IMR-90 (cell line): ENCODE measurements at regions of chr12 and their contacts with region 1.

Region 1: GRCh38 chr12:56224102-56224701 is at the start of gene NABP2:
- DNase-seq: peak; percentile 96
- ATAC-seq: peak; percentile 76
- H3K4me3 ChIP-seq: peak within 1 kb of the TSS; percentile 63
- H3K27ac ChIP-seq: peak within 1 kb of the TSS; percentile 73
- H3K4me1 ChIP-seq: peaks cover 4% of the 10 kb centered on the region; the same call in 1 of the 2 replicates
- H3K27me3 ChIP-seq: no peaks in the 10 kb centered on the region
- CTCF ChIP-seq: peak; percentile 74
- POLR2A ChIP-seq: no peak
- RAD21 ChIP-seq: no peak; the same call in none of the 2 replicates
- total RNA-seq, gene NABP2: 29.2 and 31.4 TPM in 2 replicates

Region 2: DNA sequence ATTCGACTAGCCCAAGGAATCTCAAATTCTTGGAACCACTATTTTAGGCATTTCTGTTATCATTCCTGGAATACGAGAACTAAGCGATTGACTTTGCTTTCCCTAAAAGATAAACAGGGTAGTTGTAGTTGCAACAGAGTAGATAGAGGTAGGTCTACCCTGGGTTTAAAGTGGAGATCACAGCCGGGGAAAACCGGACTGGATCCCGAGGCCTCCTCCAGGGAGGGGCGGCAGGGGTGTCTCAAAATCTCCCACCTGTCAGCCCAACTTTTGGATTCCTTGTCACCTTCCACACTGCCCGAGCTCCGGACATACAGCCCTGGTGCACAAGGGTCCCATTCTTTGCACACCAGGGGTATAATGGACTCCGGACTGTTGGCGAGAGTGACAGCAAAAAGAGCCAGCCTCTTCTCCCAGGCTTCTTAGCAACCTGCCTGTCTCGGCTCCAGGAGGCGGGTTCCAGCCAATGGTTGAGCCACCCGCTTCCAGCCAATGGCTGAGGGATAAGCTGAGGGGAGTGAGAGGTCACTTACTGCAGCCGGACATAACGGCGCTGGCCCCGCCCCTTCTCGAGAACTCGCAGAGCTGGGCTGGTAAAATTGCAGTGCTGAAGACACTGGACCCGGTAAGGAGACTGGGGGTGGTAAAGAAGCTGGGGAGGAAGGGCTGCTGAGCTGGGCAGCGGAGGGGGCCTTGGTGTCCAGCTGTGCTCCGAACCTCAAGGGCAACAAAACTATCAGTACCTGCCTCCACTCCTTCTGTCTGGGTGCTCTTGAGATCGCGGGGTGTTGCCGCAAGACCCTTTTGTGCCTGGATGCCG is 227.3 kb before region 1 on chr12 and contains the start of gene SUOX:
- CTCF ChIA-PET with region 1: no interaction called
- POLR2A ChIA-PET with region 1: no interaction called
- dilution Hi-C with region 1: no loop called
- in situ Hi-C with region 1: no loop called
- intact Hi-C with region 1: no loop called
- DNase-seq: peak; percentile 96
- ATAC-seq: peak; percentile 99
- H3K4me3 ChIP-seq: peak within 1 kb of the TSS; percentile 68
- H3K27ac ChIP-seq: peak within 1 kb of the TSS; percentile 66
- H3K4me1 ChIP-seq: peaks cover 4% of the 10 kb centered on the region
- H3K27me3 ChIP-seq: no peaks in the 10 kb centered on the region
- CTCF ChIP-seq: no peak
- POLR2A ChIP-seq: no peak; the same call in 1 of the 2 replicates
- RAD21 ChIP-seq: no peak; the same call in 1 of the 2 replicates
- total RNA-seq, gene SUOX: 13.1 and 19.4 TPM in 2 replicates

Region 3: DNA sequence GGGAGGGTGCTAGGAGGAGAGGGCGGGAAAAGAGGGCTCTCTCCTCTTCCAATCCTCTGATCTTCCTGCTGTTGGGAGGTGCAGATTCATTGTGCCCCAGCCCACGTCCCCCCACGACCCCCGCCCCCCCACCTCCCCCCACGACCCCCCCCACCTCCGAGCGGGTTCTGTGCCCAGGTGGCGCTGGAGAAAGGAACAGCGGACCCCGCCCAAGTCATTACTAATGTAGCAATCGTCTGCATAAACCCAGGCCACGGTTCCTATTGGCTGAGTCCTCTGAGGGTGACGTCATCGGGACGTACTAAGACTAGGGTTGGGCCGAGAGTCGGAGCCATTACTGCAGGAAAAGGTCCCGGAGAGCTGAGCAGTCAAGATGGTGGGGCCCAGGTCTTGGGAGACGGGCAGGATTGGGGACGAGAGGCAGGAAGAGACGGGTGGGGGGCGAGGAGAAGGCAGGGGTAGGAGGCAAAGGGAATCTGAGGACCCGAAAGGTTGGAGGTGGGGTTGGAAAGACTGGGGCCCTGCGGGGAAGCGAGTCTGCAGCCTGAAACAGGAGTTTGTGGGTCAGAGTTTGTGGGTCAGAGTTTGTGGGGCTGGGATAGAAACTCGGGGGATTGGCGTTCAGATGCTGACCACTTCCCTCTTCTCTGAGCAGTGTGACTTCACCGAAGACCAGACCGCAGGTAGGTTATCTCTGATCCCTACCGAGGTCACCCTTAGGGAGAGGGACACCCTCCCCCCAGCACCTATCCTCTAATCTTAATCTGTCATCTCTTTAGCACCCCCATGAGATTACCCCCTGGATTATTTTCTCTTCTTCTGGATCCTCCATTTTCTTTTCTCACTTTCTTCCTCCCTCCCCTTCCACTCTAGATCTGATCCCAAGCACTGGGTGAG is 65.9 kb before region 1 on chr12 and contains the start of gene MYL6:
- CTCF ChIA-PET with region 1: no interaction called
- POLR2A ChIA-PET with region 1: no interaction called
- dilution Hi-C with region 1: no loop called
- in situ Hi-C with region 1: no loop called
- intact Hi-C with region 1: loop called (anchors 2 kb)
- DNase-seq: peak; percentile 99
- ATAC-seq: peak; percentile 70
- H3K4me3 ChIP-seq: peak within 1 kb of the TSS; percentile 73
- H3K27ac ChIP-seq: peak within 1 kb of the TSS; percentile 90
- H3K4me1 ChIP-seq: peaks cover 18% of the 10 kb centered on the region
- H3K27me3 ChIP-seq: no peaks in the 10 kb centered on the region
- CTCF ChIP-seq: no peak
- POLR2A ChIP-seq: peak; percentile 99
- RAD21 ChIP-seq: no peak
- total RNA-seq, gene MYL6: 4,816 and 6,155 TPM in 2 replicates

Region 4: DNA sequence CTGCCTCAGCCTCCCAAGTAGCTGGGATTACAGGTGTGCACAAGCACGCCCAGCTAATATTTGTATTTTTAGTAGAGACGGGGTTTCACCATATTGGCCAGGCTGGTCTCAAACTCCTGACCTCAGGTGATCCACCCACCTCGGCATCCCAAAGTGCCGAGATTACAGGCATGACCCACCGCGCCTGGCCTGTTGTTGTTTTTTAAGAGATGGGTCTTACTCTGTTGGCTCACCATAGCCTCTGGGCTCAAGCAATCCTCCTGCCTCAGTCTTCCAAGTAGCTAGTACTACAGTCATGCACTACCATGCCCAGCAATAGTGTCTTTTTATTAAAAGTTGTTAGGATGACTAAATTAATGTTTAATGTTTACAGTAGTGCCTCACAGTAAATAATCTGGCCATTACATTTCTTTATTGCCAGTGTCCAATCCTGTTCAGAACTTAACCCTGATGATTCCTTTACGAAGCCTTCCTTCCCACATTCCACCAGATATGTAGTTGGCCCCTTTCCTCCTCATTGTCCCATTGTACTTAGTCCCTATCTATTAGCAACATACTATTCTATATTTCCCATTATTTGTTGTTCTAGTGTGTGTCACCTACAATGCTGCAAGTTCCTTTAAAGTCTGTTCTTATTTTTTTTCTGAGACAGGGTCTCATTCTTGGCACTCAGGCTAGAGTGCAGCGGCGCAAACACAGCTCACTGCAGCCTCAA is 26.1 kb before region 1 on chr12:
- CTCF ChIA-PET with region 1: interaction called, 8 read pairs
- POLR2A ChIA-PET with region 1: interaction called, 4 read pairs
- dilution Hi-C with region 1: no loop called
- in situ Hi-C with region 1: no loop called
- intact Hi-C with region 1: loop called (anchors 1 kb)
- DNase-seq: no peak
- ATAC-seq: no peak
- H3K4me3 ChIP-seq: no peak overlapping the region
- H3K27ac ChIP-seq: no peak overlapping the region
- H3K4me1 ChIP-seq: peaks cover 4% of the 10 kb centered on the region
- H3K27me3 ChIP-seq: no peaks in the 10 kb centered on the region
- CTCF ChIP-seq: no peak
- POLR2A ChIP-seq: no peak
- RAD21 ChIP-seq: no peak

Region 5: GRCh38 chr12:56206457-56207166 is 17.6 kb before region 1 on chr12:
- CTCF ChIA-PET with region 1: interaction called, 6 read pairs
- POLR2A ChIA-PET with region 1: interaction called, 4 read pairs
- dilution Hi-C with region 1: no loop called
- in situ Hi-C with region 1: no loop called
- intact Hi-C with region 1: loop called (anchors 2 kb)
- DNase-seq: peak; percentile 54
- ATAC-seq: peak; percentile 68
- H3K4me3 ChIP-seq: no peak overlapping the region
- H3K27ac ChIP-seq: no peak overlapping the region
- H3K4me1 ChIP-seq: peaks cover 7% of the 10 kb centered on the region
- H3K27me3 ChIP-seq: no peaks in the 10 kb centered on the region
- CTCF ChIP-seq: peak; percentile 58
- POLR2A ChIP-seq: no peak
- RAD21 ChIP-seq: peak; percentile 57

Region 6: GRCh38 chr12:56900583-56900982 is 676.4 kb after region 1 on chr12:
- CTCF ChIA-PET with region 1: no interaction called
- POLR2A ChIA-PET with region 1: no interaction called
- dilution Hi-C with region 1: no loop called
- in situ Hi-C with region 1: no loop called
- intact Hi-C with region 1: no loop called
- DNase-seq: peak; percentile 19
- ATAC-seq: no peak
- H3K4me3 ChIP-seq: no peak overlapping the region
- H3K27ac ChIP-seq: no peak overlapping the region
- H3K4me1 ChIP-seq: no peaks in the 10 kb centered on the region
- H3K27me3 ChIP-seq: no peaks in the 10 kb centered on the region
- CTCF ChIP-seq: no peak
- POLR2A ChIP-seq: no peak
- RAD21 ChIP-seq: no peak